ENCODE measurements at regions of chr9 and their contacts with region 1.

Region 1: DNA sequence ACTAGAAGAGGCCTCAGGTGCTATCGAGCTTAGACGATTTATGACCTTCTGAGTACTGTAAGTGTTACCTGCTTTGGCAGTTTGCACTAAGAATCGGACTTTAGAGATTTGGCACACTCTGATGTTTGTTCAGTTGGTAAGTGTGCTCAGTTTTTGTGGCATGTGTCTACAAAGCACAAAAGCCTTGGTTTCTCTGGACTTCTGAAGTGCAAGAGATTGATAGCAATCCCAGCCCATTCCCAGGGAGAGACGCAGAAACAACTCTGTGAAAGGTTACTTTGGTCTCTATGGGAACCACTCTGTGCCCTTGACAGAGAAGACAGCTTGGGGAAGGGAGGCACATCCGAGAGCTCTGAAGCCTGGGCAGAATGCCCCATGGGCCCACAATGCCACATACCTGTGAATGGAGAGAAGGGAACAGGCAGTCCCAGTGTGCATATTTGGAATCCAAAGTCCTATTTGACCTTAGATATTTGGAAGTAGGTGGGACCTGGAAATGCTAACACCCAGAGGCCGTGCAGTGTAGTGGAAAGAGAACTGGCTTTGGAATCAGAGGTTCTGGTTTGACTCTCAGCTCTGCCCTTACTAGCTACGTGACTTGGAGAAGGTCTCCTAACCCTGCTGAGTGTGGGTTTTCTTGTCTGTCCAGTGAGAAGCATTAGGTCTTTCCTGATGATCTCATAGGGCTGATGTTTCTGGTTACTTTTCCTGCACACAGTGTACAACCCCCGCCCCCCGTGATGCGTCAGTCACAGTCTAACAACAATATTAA is 194.3 kb upstream of the VLDLR start:
- DNase-seq: no peak
- H3K4me3 ChIP-seq: no peak overlapping the region
- H3K27ac ChIP-seq: peak overlapping the region in 1 of 2 donors; percentile 87
- H3K4me1 ChIP-seq: peaks cover 9% of the 10 kb centered on the region
- H3K27me3 ChIP-seq: no peaks in the 10 kb centered on the region
- CTCF ChIP-seq: no peak
- EP300 ChIP-seq: no peak
- POLR2A ChIP-seq: no peak

Region 2: GRCh38 chr9:2014696-2015580 is 412.4 kb before region 1 on chr9 and contains the start of gene SMARCA2:
- intact Hi-C with region 1: loop called in 1 of 4 experiments (anchors 10 kb)
- DNase-seq: peak; percentile 97 to 98 (median 98)
- H3K4me3 ChIP-seq: peak within 1 kb of the TSS; percentile 69
- H3K27ac ChIP-seq: peak within 1 kb of the TSS; percentile 85 to 98
- H3K4me1 ChIP-seq: peaks cover 2% of the 10 kb centered on the region
- H3K27me3 ChIP-seq: no peaks in the 10 kb centered on the region
- CTCF ChIP-seq: no peak
- EP300 ChIP-seq: no peak
- POLR2A ChIP-seq: peak; percentile 84
- total RNA-seq, gene SMARCA2: 153 to 404 (median 199) TPM

Region 3: DNA sequence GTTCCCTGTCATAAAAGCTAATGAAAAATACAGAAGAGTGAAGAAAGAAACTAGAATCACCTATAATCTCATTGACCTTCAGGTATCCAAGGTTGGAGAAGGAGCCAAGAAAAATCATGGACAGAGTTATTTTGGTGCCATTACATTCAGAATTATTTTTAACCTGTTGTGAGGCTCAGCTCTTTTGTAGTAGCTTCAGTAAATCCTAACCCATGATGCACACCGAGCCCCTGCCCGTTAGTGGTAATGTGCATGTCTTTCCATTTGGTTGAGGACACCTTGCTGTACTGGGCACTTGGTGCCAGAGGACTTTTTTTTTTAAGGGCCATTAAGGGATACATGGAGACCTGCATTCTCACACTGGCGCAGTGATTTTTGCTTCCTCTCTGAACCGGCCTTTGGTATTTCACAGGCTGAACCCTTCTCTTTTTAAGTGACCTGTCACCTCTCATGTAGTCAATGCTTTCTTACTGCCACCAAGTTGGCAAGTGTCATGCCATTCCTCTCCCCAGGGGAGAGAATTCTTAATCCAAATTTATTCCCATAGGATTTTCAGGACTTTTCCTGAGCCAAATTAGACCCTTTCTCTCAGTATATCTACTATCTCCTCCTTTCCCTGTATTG is 286.6 kb before region 1 on chr9:
- intact Hi-C with region 1: loop called in 1 of 4 experiments (anchors 10 kb)
- DNase-seq: no peak
- H3K4me3 ChIP-seq: no peak overlapping the region
- H3K27ac ChIP-seq: no peak overlapping the region
- H3K4me1 ChIP-seq: peaks cover 3% of the 10 kb centered on the region
- H3K27me3 ChIP-seq: no peaks in the 10 kb centered on the region
- CTCF ChIP-seq: no peak
- EP300 ChIP-seq: no peak
- POLR2A ChIP-seq: no peak

Region 4: GRCh38 chr9:2158111-2158610 is 269.1 kb before region 1 on chr9:
- intact Hi-C with region 1: no loop called
- DNase-seq: peak; percentile 60 to 73 (median 66)
- H3K4me3 ChIP-seq: peak overlapping the region; percentile 36
- H3K27ac ChIP-seq: peak overlapping the region in 1 of 2 donors; percentile 85
- H3K4me1 ChIP-seq: peaks cover 2% of the 10 kb centered on the region
- H3K27me3 ChIP-seq: no peaks in the 10 kb centered on the region
- CTCF ChIP-seq: peak in 1 of 3 donors; percentile 17
- EP300 ChIP-seq: no peak
- POLR2A ChIP-seq: no peak

Region 5: GRCh38 chr9:2234371-2234893 is 192.9 kb before region 1 on chr9:
- intact Hi-C with region 1: loop called in 1 of 4 experiments (anchors 10 kb)
- DNase-seq: peak; percentile 52 to 69 (median 57)
- H3K4me3 ChIP-seq: no peak overlapping the region
- H3K27ac ChIP-seq: peak overlapping the region in 1 of 2 donors; percentile 74
- H3K4me1 ChIP-seq: peaks cover 19% of the 10 kb centered on the region
- H3K27me3 ChIP-seq: no peaks in the 10 kb centered on the region
- CTCF ChIP-seq: no peak
- EP300 ChIP-seq: no peak
- POLR2A ChIP-seq: no peak

Region 6: DNA sequence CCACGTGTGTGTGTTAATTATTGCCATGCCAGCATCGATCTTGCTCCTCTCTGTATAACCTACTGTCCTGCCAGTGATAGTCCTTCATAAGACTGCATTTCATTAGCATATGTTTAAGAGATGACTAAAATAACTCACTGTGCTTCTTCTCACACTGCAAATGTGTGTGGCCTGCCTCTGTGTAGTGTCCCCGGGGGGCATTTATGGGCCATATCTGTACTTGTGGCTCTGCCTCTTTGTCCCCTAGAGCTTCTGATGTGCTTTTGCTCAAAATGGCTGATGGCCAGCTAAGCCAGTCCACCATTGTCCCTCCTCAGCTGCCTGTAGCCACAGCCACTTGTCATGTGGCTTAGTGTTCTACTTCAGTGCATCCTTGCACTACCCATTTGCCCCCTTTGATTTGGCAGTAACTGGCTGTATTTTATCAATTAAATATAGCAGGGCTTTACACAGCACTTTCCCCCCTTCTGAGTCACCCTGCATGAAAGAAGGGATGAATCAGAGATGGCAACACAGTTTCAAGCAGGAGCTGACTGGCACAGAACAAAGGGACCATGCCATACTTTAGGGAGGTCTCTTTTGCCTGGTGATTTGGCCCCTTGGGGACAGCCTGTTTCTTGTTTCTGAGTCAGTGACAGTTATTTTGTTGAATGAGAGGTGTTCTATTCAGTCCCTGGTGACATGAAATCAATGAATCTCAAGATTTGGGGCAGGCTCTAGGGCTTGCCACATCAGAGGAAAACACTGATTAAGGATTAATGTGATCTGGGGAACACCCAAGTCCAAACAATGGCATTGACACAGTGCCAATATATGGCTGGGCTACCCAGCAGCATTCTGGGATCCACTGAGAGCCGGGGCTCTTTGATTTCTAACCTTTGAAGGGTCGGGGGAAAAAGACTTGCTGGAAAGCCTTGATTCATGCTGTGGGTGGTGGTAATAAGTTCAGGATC is 166.7 kb before region 1 on chr9:
- intact Hi-C with region 1: loop called in 1 of 4 experiments (anchors 10 kb)
- DNase-seq: no peak
- H3K4me3 ChIP-seq: no peak overlapping the region
- H3K27ac ChIP-seq: no peak overlapping the region
- H3K4me1 ChIP-seq: no peaks in the 10 kb centered on the region
- H3K27me3 ChIP-seq: no peaks in the 10 kb centered on the region
- CTCF ChIP-seq: no peak
- EP300 ChIP-seq: no peak
- POLR2A ChIP-seq: no peak

Region 7: GRCh38 chr9:2727966-2728613 is 300.8 kb after region 1 on chr9:
- intact Hi-C with region 1: loop called in 1 of 4 experiments (anchors 5 kb)
- DNase-seq: peak in 4 of 5 donors; percentile 40 to 78 (median 48)
- H3K4me3 ChIP-seq: no peak overlapping the region
- H3K27ac ChIP-seq: peak overlapping the region in 1 of 2 donors; percentile 78
- H3K4me1 ChIP-seq: peaks cover 13% of the 10 kb centered on the region
- H3K27me3 ChIP-seq: no peaks in the 10 kb centered on the region
- CTCF ChIP-seq: peak; percentile 37 to 81 (median 79)
- EP300 ChIP-seq: no peak
- POLR2A ChIP-seq: no peak

Measured in ovary (tissue), 10 donors.